ENCODE measurements at regions of chr18 and their contacts with region 1.

Region 1: GRCh38 chr18:58493516-58494253 is 135.2 kb downstream of the ALPK2 start:
- DNase-seq: peak; percentile 37 to 72 (median 64)
- ATAC-seq: peak; percentile 93
- H3K4me3 ChIP-seq: no peak overlapping the region
- H3K4me3 Mint-ChIP-seq: peak overlapping the region in 4 of 10 donors; percentile 22 to 56 (median 28)
- H3K27ac ChIP-seq: no peak overlapping the region
- H3K27ac Mint-ChIP-seq: peak overlapping the region in 2 of 9 donors; percentile 0 to 47
- H3K4me1 ChIP-seq: no peaks in the 10 kb centered on the region
- H3K4me1 Mint-ChIP-seq: peaks cover 5 to 11% (median 7%) of the 10 kb centered on the region in 7 donors
- H3K27me3 ChIP-seq: no peaks in the 10 kb centered on the region
- H3K27me3 Mint-ChIP-seq: peaks cover 19 to 45% (median 29%) of the 10 kb centered on the region in 5 donors

Region 2: DNA sequence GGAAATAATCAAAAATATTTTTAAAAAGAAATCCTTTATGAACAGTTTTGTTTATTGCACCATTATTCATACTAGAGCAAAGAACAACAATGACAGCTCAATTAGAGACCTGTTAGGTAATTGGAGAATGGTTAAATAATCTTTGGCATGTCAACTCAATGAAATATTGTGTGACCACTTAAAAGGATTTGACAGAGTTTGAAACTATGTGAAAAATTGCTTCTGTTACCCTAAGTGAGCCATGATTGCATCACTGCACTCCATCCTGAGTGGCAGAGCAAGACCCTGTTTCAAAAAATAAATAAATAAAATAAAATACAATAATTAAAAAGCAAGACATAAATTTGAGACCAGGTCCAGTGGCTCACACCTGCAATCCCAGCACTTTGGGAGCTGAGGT is 624.5 kb before region 1 on chr18:
- CTCF ChIA-PET with region 1: no interaction called
- POLR2A ChIA-PET with region 1: no interaction called
- intact Hi-C with region 1: no loop called
- DNase-seq: no peak
- ATAC-seq: no peak
- H3K4me3 ChIP-seq: no peak overlapping the region
- H3K4me3 Mint-ChIP-seq: no peak overlapping the region
- H3K27ac ChIP-seq: no peak overlapping the region
- H3K27ac Mint-ChIP-seq: no peak overlapping the region
- H3K4me1 ChIP-seq: no peaks in the 10 kb centered on the region
- H3K4me1 Mint-ChIP-seq: no peaks in the 10 kb centered on the region
- H3K27me3 ChIP-seq: no peaks in the 10 kb centered on the region
- H3K27me3 Mint-ChIP-seq: peaks cover 0 to 15% (median 8%) of the 10 kb centered on the region in 5 donors

Region 3: DNA sequence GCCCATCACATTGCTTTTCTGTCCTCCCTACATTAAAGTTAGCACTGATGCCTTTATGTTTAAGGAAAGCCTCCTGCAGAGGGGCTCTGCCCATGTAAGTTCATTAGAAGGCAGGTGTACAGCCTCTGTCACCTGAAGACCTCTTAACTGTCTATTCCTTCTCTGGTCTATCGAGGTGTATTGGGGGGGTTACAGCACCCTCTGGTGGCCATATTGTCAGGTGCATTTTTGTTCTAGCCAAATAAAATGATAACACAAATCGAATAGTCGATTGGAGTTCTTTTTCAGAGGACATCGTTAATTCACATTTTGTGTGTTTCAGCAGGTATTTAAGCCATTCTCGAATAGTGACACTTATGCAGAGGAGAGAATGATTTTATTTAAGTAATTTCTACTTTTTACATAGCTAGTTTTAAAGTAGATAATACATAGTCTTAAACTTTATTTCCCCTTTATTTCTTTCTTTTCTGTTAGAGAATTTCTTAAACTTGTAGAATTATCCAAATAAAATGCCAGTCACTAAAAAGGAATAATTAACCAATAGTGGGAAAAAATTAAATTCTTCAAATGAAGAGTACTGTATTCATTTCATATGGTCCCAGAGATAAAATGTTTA is 312.8 kb before region 1 on chr18:
- CTCF ChIA-PET with region 1: no interaction called
- POLR2A ChIA-PET with region 1: no interaction called
- intact Hi-C with region 1: loop called in 1 of 2 experiments (anchors 5 kb)
- DNase-seq: peak; percentile 25 to 68 (median 50)
- ATAC-seq: peak; percentile 81
- H3K4me3 ChIP-seq: no peak overlapping the region
- H3K4me3 Mint-ChIP-seq: no peak overlapping the region
- H3K27ac ChIP-seq: no peak overlapping the region
- H3K27ac Mint-ChIP-seq: no peak overlapping the region
- H3K4me1 ChIP-seq: no peaks in the 10 kb centered on the region
- H3K4me1 Mint-ChIP-seq: peaks cover 0 to 4% (median 0%) of the 10 kb centered on the region in 7 donors
- H3K27me3 ChIP-seq: peaks cover 0 to 6% of the 10 kb centered on the region in 2 donors
- H3K27me3 Mint-ChIP-seq: peaks cover 0 to 12% (median 4%) of the 10 kb centered on the region in 5 donors

Region 4: DNA sequence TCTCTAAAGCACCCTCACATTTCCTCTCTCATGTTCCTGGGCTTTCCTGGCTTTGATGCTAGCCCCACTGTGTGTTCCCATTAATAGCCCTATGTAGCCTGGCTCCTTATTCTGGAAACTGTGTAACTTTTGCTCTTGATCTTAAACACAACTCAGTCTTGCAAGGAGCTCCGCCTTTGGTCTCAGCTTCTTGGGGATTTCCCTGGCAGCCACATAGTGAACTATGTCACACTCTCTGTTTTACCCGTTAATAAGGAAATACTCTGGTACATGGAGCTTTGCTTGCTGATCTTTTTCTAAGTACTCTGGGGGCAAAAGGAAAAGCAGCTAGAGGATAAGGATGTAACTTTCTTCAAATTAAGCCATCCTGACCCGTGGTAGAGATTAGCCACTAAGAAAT is 190.3 kb before region 1 on chr18:
- CTCF ChIA-PET with region 1: no interaction called
- POLR2A ChIA-PET with region 1: no interaction called
- intact Hi-C with region 1: loop called in 1 of 2 experiments (anchors 5 kb)
- DNase-seq: peak in 6 of 9 donors; percentile 21 to 48 (median 30)
- ATAC-seq: peak; percentile 80
- H3K4me3 ChIP-seq: no peak overlapping the region
- H3K4me3 Mint-ChIP-seq: peak overlapping the region; percentile 23 to 77 (median 64)
- H3K27ac ChIP-seq: no peak overlapping the region
- H3K27ac Mint-ChIP-seq: peak overlapping the region; percentile 12 to 84 (median 70)
- H3K4me1 ChIP-seq: peaks cover 0 to 23% of the 10 kb centered on the region in 2 donors
- H3K4me1 Mint-ChIP-seq: peaks cover 8 to 31% (median 22%) of the 10 kb centered on the region in 7 donors
- H3K27me3 ChIP-seq: no peaks in the 10 kb centered on the region
- H3K27me3 Mint-ChIP-seq: peaks cover 0 to 33% (median 0%) of the 10 kb centered on the region in 5 donors

Region 5: GRCh38 chr18:58400337-58400870 is 93.3 kb before region 1 on chr18:
- CTCF ChIA-PET with region 1: no interaction called
- POLR2A ChIA-PET with region 1: interaction called, 3 read pairs
- intact Hi-C with region 1: loop called (anchors 1 kb)
- DNase-seq: peak in 4 of 9 donors; percentile 10 to 26 (median 20)
- ATAC-seq: peak; percentile 44
- H3K4me3 ChIP-seq: no peak overlapping the region
- H3K4me3 Mint-ChIP-seq: peak overlapping the region in 9 of 10 donors; percentile 22 to 71 (median 60)
- H3K27ac ChIP-seq: no peak overlapping the region
- H3K27ac Mint-ChIP-seq: peak overlapping the region in 8 of 9 donors; percentile 41 to 88 (median 83)
- H3K4me1 ChIP-seq: peaks cover 0 to 3% of the 10 kb centered on the region in 2 donors
- H3K4me1 Mint-ChIP-seq: peaks cover 6 to 36% (median 30%) of the 10 kb centered on the region in 7 donors
- H3K27me3 ChIP-seq: no peaks in the 10 kb centered on the region
- H3K27me3 Mint-ChIP-seq: peaks cover 0 to 3% (median 0%) of the 10 kb centered on the region in 5 donors

Region 6: GRCh38 chr18:58541789-58542425 is 48.2 kb after region 1 on chr18:
- CTCF ChIA-PET with region 1: interaction called, 10 read pairs
- POLR2A ChIA-PET with region 1: no interaction called
- intact Hi-C with region 1: no loop called
- DNase-seq: peak in 1 of 9 donors; percentile 52
- ATAC-seq: peak; percentile 79
- H3K4me3 ChIP-seq: no peak overlapping the region
- H3K4me3 Mint-ChIP-seq: peak overlapping the region in 1 of 10 donors; percentile 23
- H3K27ac ChIP-seq: no peak overlapping the region
- H3K27ac Mint-ChIP-seq: peak overlapping the region in 1 of 9 donors; percentile 29
- H3K4me1 ChIP-seq: peaks cover 7 to 14% of the 10 kb centered on the region in 2 donors
- H3K4me1 Mint-ChIP-seq: peaks cover 23 to 59% (median 40%) of the 10 kb centered on the region in 7 donors
- H3K27me3 ChIP-seq: no peaks in the 10 kb centered on the region
- H3K27me3 Mint-ChIP-seq: peaks cover 0 to 41% (median 0%) of the 10 kb centered on the region in 5 donors

Measured in naive thymus-derived CD4-positive, alpha-beta T cell (primary cell).